Heart left ventricle (tissue), 16 donors: ENCODE measurements at regions of chr21 and their contacts with region 1.

Region 1: GRCh38 chr21:37551993-37552355 is 185.4 kb downstream of the DYRK1A start:
- DNase-seq: no peak
- ATAC-seq: peak in 2 of 4 donors; percentile 8 to 11
- H3K4me3 ChIP-seq: no peak overlapping the region
- H3K27ac ChIP-seq: peak overlapping the region in 11 of 12 donors; percentile 31 to 86 (median 70)
- H3K4me1 ChIP-seq: peaks cover 0 to 43% (median 23%) of the 10 kb centered on the region in 12 donors
- H3K27me3 ChIP-seq: no peaks in the 10 kb centered on the region
- CTCF ChIP-seq: no peak
- POLR2A ChIP-seq: no peak

Region 2: DNA sequence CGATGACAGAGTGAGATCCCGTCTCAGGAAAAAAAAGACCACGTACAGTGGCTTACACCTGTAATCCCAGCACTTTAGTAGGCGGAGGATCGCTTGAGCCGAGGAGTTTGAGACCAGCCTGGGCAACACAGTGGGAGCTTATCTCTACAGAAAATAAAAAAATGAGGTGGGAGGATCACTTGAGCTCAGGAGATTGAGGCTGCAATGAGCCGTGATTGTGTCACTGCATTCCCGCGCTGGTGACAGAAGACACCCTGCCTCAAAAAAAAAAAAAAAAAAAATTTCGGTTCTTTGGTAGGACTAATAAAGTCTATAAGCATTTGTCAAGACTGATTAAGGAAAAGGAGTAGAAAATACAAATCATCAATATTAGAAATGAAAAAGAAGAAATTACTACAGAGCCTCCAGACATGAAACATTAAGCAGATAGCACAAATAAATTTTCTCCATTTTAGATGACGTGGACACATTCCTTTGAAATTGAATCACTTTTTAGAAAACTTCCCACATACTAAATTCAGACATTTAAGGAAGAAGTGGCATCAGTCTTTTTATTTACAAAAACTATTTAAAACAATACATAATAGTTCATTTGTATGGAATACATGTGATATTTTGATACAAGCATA is 1201.6 kb before region 1 on chr21:
- intact Hi-C with region 1: no loop called
- DNase-seq: no peak
- ATAC-seq: peak in 3 of 4 donors; percentile 38 to 68 (median 60)
- H3K4me3 ChIP-seq: no peak overlapping the region
- H3K27ac ChIP-seq: peak overlapping the region in 3 of 12 donors; percentile 3 to 20 (median 5)
- H3K4me1 ChIP-seq: peaks cover 0 to 5% (median 0%) of the 10 kb centered on the region in 12 donors
- H3K27me3 ChIP-seq: no peaks in the 10 kb centered on the region
- CTCF ChIP-seq: no peak
- POLR2A ChIP-seq: no peak

Region 3: GRCh38 chr21:37322084-37322483 is 229.9 kb before region 1 on chr21:
- intact Hi-C with region 1: no loop called
- DNase-seq: no peak
- ATAC-seq: no peak
- H3K4me3 ChIP-seq: no peak overlapping the region
- H3K27ac ChIP-seq: no peak overlapping the region
- H3K4me1 ChIP-seq: no peaks in the 10 kb centered on the region
- H3K27me3 ChIP-seq: no peaks in the 10 kb centered on the region
- CTCF ChIP-seq: no peak
- POLR2A ChIP-seq: no peak

Region 4: GRCh38 chr21:37532868-37533780 is 18.9 kb before region 1 on chr21:
- intact Hi-C with region 1: loop called in 2 of 10 experiments (anchors 1 to 2 kb)
- DNase-seq: peak in 2 of 5 donors; percentile 50 to 53
- ATAC-seq: peak; percentile 22 to 52 (median 27)
- H3K4me3 ChIP-seq: no peak overlapping the region
- H3K27ac ChIP-seq: peak overlapping the region in 1 of 12 donors; percentile 72
- H3K4me1 ChIP-seq: peaks cover 0 to 26% (median 9%) of the 10 kb centered on the region in 12 donors
- H3K27me3 ChIP-seq: peaks cover 0 to 13% (median 0%) of the 10 kb centered on the region in 9 donors
- CTCF ChIP-seq: peak in 2 of 12 donors; percentile 14 to 26
- POLR2A ChIP-seq: no peak